BJ (cell line): ENCODE measurements at regions of chr10 and their contacts with region 1.

Region 1: GRCh38 chr10:13659897-13660550 is 73.3 kb downstream of the PRPF18 start:
- DNase-seq: peak; percentile 20
- H3K4me3 ChIP-seq: no peak overlapping the region
- H3K27me3 ChIP-seq: no peaks in the 10 kb centered on the region
- CTCF ChIP-seq: peak; percentile 90

Region 2: DNA sequence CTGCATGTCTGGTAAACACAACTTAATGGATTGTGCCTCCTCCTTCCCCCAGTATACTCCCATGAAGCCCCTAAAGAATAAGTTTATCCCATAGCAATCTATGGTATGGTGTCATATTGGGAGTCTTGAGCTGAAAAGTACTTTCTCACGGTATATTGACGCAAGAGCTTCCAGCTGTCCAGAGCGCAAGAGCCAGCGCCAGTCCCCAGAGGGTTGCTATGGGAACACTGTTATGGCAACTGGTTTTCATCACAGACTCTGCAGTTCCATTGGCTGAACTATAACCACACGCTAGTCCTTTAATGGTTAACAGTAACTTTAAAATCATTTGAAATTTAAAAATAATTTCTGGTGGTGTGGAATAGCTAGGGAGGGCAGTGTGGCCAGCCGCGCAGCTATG is 26.3 kb before region 1 on chr10:
- CTCF ChIA-PET with region 1: interaction called, 5 read pairs
- POLR2A ChIA-PET with region 1: interaction called, 15 read pairs
- DNase-seq: peak; percentile 15
- H3K4me3 ChIP-seq: no peak overlapping the region
- H3K27me3 ChIP-seq: no peaks in the 10 kb centered on the region
- CTCF ChIP-seq: no peak

Region 3: DNA sequence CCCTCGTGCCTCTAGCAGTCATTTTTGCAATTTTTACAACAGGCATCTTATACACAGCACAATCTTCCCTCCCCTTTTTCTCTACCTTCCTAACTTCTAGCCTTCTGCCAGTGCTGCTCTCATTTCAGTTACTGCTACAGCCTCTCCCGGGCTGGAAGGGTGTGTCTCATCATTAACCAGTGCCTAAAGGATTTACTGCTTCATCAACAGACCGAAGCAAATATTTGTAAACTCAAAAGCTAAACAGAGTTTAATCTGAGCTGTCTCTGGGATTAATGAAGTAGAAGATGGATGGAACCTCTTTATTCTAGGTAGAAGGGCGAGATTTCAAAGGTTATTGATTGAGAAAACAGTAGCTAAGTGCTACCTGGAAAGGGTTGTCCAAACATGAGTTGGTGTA is 21.1 kb after region 1 on chr10:
- CTCF ChIA-PET with region 1: interaction called, 12 read pairs
- POLR2A ChIA-PET with region 1: no interaction called
- DNase-seq: no peak
- H3K4me3 ChIP-seq: no peak overlapping the region
- H3K27me3 ChIP-seq: no peaks in the 10 kb centered on the region
- CTCF ChIP-seq: no peak

Region 4: GRCh38 chr10:13787015-13787421 is 127.0 kb after region 1 on chr10:
- CTCF ChIA-PET with region 1: interaction called, 29 read pairs
- POLR2A ChIA-PET with region 1: no interaction called
- DNase-seq: no peak
- H3K4me3 ChIP-seq: no peak overlapping the region
- H3K27me3 ChIP-seq: no peaks in the 10 kb centered on the region
- CTCF ChIP-seq: no peak